CD8-positive, alpha-beta T cell (primary cell): ENCODE measurements at regions of chr19 and their contacts with region 1.

Region 1: DNA sequence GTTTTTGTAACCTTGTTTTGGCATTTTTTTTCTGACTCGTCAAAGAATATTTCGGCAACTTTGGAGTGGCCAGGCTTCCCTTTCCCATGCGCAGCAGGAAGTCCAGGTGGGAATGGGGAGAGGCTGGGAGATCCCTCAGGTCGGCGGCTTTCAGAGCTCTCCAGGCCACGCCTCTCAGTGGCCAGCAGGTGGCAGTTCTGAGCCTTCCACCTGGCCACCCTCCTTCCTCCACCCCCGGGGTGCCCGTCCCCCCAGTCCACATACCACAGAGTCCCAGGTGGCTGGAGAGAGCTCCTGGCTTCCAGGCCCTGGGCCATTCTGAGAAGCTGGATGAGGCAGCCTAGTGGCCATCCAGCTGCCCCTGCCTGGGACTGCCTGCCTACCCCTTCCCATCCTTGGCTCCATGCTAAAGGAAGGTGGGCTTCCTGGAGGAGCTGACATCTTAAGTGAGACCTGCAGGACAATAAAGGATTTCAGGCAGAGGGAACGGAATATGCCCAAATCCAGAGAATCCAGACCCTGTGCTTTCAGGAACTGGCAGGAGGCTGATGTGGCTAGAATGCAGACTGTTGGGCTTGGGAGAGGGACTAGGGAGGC is 46.3 kb downstream of the CCNE1 start:
- DNase-seq: peak in 6 of 9 experiments; percentile 33 to 65 (median 50)
- ATAC-seq: peak; percentile 86
- H3K4me3 ChIP-seq: no peak overlapping the region
- H3K4me3 Mint-ChIP-seq: no peak overlapping the region
- H3K27ac ChIP-seq: no peak overlapping the region
- H3K27ac Mint-ChIP-seq: no peak overlapping the region
- H3K4me1 ChIP-seq: peaks cover 5% of the 10 kb centered on the region
- H3K4me1 Mint-ChIP-seq: peaks cover 2% of the 10 kb centered on the region
- H3K27me3 ChIP-seq: peaks cover 0 to 1% of the 10 kb centered on the region in 2 experiments
- H3K27me3 Mint-ChIP-seq: peaks cover 14% of the 10 kb centered on the region
- CTCF ChIP-seq: peak; percentile 67

Region 2: GRCh38 chr19:29779921-29780320 is 78.2 kb before region 1 on chr19:
- CTCF ChIA-PET with region 1: interaction called, 10 read pairs
- POLR2A ChIA-PET with region 1: no interaction called
- intact Hi-C with region 1: no loop called
- DNase-seq: peak in 1 of 9 experiments; percentile 34
- ATAC-seq: peak; percentile 34
- H3K4me3 ChIP-seq: no peak overlapping the region
- H3K4me3 Mint-ChIP-seq: no peak overlapping the region
- H3K27ac ChIP-seq: no peak overlapping the region
- H3K27ac Mint-ChIP-seq: no peak overlapping the region
- H3K4me1 ChIP-seq: no peaks in the 10 kb centered on the region
- H3K4me1 Mint-ChIP-seq: no peaks in the 10 kb centered on the region
- H3K27me3 ChIP-seq: no peaks in the 10 kb centered on the region
- H3K27me3 Mint-ChIP-seq: peaks cover 5% of the 10 kb centered on the region
- CTCF ChIP-seq: no peak

Region 3: GRCh38 chr19:29831041-29831548 is 27.0 kb before region 1 on chr19:
- CTCF ChIA-PET with region 1: interaction called, 18 read pairs
- POLR2A ChIA-PET with region 1: no interaction called
- intact Hi-C with region 1: no loop called
- DNase-seq: peak in 8 of 9 experiments; percentile 51 to 89 (median 72)
- ATAC-seq: peak; percentile 98
- H3K4me3 ChIP-seq: peak overlapping the region; percentile 10 to 17
- H3K4me3 Mint-ChIP-seq: peak overlapping the region; percentile 82
- H3K27ac ChIP-seq: peak overlapping the region; percentile 49 to 66
- H3K27ac Mint-ChIP-seq: peak overlapping the region; percentile 98
- H3K4me1 ChIP-seq: peaks cover 32% of the 10 kb centered on the region
- H3K4me1 Mint-ChIP-seq: peaks cover 45% of the 10 kb centered on the region
- H3K27me3 ChIP-seq: no peaks in the 10 kb centered on the region
- H3K27me3 Mint-ChIP-seq: no peaks in the 10 kb centered on the region
- CTCF ChIP-seq: no peak